ENCODE measurements at regions of chr10 and their contacts with region 1.

Region 1: DNA sequence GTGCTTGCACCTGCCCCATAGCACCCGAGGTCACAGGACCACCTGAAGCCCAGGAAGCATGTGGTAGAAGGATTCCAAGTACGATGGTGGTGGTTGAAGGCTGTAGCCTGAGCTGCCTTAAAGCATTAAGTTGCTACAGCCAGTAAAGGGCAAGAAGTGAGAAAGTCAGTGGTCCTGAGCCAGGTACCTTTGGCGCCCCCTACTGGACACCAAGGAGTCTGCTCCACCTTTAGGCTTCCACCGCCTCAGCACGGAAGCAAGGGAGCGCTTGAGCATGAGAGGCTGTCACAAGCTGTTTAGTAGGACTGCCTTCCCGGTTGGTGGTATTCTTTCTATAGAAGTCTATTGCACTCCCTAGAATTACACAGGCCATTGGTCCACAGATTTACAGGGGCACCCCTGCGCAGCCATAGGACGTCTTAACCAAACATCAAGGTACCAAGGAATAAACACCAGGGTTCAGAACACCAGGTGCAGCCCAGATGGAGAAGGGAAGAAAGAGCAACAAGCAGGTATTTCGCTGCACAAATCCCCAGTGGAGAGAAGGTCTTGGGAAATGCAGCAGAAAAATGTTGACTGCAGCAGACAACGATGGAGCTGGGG is 2.2 kb downstream of the CRTAC1 start:
- DNase-seq: peak; percentile 80
- ATAC-seq: peak; percentile 86
- H3K4me3 Mint-ChIP-seq: no peak overlapping the region
- H3K27ac Mint-ChIP-seq: no peak overlapping the region
- H3K4me1 Mint-ChIP-seq: peaks cover 4% of the 10 kb centered on the region
- H3K27me3 Mint-ChIP-seq: peaks cover 58% of the 10 kb centered on the region
- CTCF ChIP-seq: peak; percentile 82

Region 2: GRCh38 chr10:97701438-97702069 is 326.7 kb before region 1 on chr10:
- CTCF ChIA-PET with region 1: no interaction called
- POLR2A ChIA-PET with region 1: no interaction called
- intact Hi-C with region 1: no loop called
- DNase-seq: peak; percentile 61
- ATAC-seq: peak; percentile 99
- H3K4me3 Mint-ChIP-seq: no peak overlapping the region
- H3K27ac Mint-ChIP-seq: no peak overlapping the region
- H3K4me1 Mint-ChIP-seq: no peaks in the 10 kb centered on the region
- H3K27me3 Mint-ChIP-seq: no peaks in the 10 kb centered on the region
- CTCF ChIP-seq: peak; percentile 89

Region 3: DNA sequence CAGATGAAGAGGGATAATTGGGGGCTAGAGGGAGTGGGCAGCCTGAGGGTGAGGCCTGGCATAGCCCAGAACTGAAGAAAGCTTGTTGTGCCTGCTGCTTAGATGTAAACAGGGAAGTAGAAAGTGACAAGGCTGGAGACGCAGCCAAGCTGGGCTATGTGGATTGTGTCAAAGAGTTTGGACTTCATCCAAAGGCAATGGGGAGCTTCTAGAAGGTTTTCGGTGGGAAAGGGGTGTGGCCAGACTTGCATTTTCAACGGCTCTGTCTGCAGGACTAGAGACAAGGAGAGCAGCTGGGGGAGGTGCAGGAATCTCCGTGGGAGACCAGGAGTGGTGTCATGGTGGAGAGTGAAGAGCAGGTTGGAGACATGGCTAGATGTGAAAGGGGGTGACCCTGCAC is 129.8 kb before region 1 on chr10:
- CTCF ChIA-PET with region 1: no interaction called
- POLR2A ChIA-PET with region 1: no interaction called
- intact Hi-C with region 1: no loop called
- DNase-seq: no peak
- ATAC-seq: no peak
- H3K4me3 Mint-ChIP-seq: no peak overlapping the region
- H3K27ac Mint-ChIP-seq: no peak overlapping the region
- H3K4me1 Mint-ChIP-seq: no peaks in the 10 kb centered on the region
- H3K27me3 Mint-ChIP-seq: peaks cover 1% of the 10 kb centered on the region
- CTCF ChIP-seq: no peak

Region 4: DNA sequence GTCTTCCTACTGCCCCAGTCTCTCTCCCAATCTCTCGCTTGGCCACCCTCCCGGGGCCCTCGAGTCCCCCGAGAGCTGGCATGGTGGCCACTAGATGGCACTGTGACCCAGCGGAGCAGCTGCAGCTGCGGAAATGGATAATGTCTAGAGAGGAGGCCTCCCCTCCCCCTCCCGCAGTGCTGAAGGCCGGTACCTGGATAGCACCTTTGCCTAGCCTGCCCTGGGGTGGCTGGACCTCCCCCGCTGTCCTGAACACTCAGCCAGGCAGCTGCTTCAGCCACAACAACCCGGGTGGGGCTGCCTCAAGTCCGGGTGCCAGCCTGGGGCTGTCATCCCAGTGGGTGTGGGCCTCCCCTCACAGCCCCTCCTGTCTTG is 113.4 kb before region 1 on chr10:
- CTCF ChIA-PET with region 1: interaction called, 20 read pairs
- POLR2A ChIA-PET with region 1: no interaction called
- intact Hi-C with region 1: loop called (anchors 5 kb)
- DNase-seq: peak; percentile 86
- ATAC-seq: peak; percentile 96
- H3K4me3 Mint-ChIP-seq: no peak overlapping the region
- H3K27ac Mint-ChIP-seq: no peak overlapping the region
- H3K4me1 Mint-ChIP-seq: peaks cover 7% of the 10 kb centered on the region
- H3K27me3 Mint-ChIP-seq: peaks cover 9% of the 10 kb centered on the region
- CTCF ChIP-seq: peak; percentile 96

Region 5: GRCh38 chr10:98016772-98017475 is 11.3 kb before region 1 on chr10:
- CTCF ChIA-PET with region 1: interaction called, 12 read pairs
- POLR2A ChIA-PET with region 1: no interaction called
- intact Hi-C with region 1: no loop called
- DNase-seq: no peak
- ATAC-seq: no peak
- H3K4me3 Mint-ChIP-seq: no peak overlapping the region
- H3K27ac Mint-ChIP-seq: no peak overlapping the region
- H3K4me1 Mint-ChIP-seq: no peaks in the 10 kb centered on the region
- H3K27me3 Mint-ChIP-seq: peaks cover 14% of the 10 kb centered on the region
- CTCF ChIP-seq: no peak

Region 6: GRCh38 chr10:98038288-98038687 is 10.0 kb after region 1 on chr10:
- CTCF ChIA-PET with region 1: interaction called, 68 read pairs
- POLR2A ChIA-PET with region 1: interaction called, 3 read pairs
- intact Hi-C with region 1: no loop called
- DNase-seq: no peak
- ATAC-seq: no peak
- H3K4me3 Mint-ChIP-seq: no peak overlapping the region
- H3K27ac Mint-ChIP-seq: no peak overlapping the region
- H3K4me1 Mint-ChIP-seq: no peaks in the 10 kb centered on the region
- H3K27me3 Mint-ChIP-seq: peaks cover 73% of the 10 kb centered on the region
- CTCF ChIP-seq: no peak

Region 7: DNA sequence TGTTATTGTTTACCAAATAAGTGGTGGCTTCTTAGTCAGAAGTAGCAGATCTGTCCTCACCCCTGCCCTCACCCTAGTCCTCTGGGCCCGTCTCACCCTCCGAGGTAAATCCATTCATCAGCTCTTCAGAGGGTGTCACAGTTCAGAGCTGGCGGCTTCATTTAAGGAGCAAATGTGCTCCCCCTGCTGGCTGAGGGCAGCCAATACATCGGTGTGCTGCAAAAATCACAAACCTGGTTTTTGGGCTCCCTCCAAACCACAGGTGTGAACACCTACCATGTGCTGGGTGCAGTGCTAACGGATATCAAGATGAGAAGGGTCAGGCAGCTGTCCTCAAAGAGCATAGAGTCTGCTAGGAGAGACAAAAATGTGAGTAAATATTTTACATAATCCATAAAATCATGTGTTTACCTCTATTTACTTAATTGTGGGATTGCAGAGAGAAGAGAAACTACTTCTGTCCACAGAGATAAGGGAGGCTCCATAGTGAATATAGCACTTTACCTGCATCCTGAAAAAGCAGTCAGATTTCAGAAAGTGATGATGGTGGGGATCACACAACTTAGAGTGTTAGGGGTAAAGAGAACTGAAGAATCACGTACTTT is 17.6 kb after region 1 on chr10:
- CTCF ChIA-PET with region 1: interaction called, 68 read pairs
- POLR2A ChIA-PET with region 1: interaction called, 3 read pairs
- intact Hi-C with region 1: no loop called
- DNase-seq: peak; percentile 74
- ATAC-seq: peak; percentile 97
- H3K4me3 Mint-ChIP-seq: no peak overlapping the region
- H3K27ac Mint-ChIP-seq: no peak overlapping the region
- H3K4me1 Mint-ChIP-seq: peaks cover 4% of the 10 kb centered on the region
- H3K27me3 Mint-ChIP-seq: peaks cover 28% of the 10 kb centered on the region
- CTCF ChIP-seq: peak; percentile 83

Measured in activated CD8-positive, alpha-beta T cell treated with anti-CD3 and anti-CD28 coated beads for 36 hours (primary cell).